ENCODE measurements at regions of chr3 and their contacts with region 1.

Region 1: DNA sequence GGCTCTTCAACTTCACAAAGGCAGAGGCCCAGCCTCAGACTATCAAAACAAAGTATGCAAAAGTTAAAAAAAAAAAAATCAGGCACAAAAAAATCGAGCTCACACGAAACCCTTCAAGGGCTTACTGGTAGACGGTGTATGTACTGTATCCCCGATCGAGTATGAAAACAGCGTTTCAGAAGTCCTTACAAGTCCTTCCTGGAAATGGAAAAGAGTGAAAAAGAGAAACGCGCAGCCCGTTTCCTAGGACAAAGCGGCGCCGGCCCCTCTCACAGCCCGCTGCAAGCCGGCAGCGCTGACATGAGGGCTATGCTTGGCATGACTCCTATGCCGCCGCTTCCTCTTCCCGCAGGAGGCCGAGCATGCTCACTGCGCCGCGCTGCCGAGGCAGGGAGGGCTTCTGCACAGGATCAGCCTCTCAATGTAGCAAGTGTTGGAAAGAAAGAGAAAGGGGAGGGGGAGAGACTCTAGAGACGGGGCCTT is at the start of gene VGLL4:
- DNase-seq: peak; percentile 72
- H3K4me3 Mint-ChIP-seq: peak within 1 kb of the TSS; percentile 98
- H3K27ac Mint-ChIP-seq: peak within 1 kb of the TSS; percentile 89
- H3K4me1 Mint-ChIP-seq: peaks cover 33% of the 10 kb centered on the region
- H3K27me3 Mint-ChIP-seq: no peaks in the 10 kb centered on the region
- total RNA-seq, gene VGLL4: 6.3 to 7.7 TPM

Region 2: GRCh38 chr3:11582191-11582968 is 61.3 kb before region 1 on chr3:
- CTCF ChIA-PET with region 1: interaction called, 3 read pairs
- intact Hi-C with region 1: loop called (anchors 5 kb)
- DNase-seq: peak; percentile 51
- H3K4me3 Mint-ChIP-seq: peak overlapping the region; percentile 56
- H3K27ac Mint-ChIP-seq: no peak overlapping the region
- H3K4me1 Mint-ChIP-seq: peaks cover 52% of the 10 kb centered on the region
- H3K27me3 Mint-ChIP-seq: no peaks in the 10 kb centered on the region

Region 3: DNA sequence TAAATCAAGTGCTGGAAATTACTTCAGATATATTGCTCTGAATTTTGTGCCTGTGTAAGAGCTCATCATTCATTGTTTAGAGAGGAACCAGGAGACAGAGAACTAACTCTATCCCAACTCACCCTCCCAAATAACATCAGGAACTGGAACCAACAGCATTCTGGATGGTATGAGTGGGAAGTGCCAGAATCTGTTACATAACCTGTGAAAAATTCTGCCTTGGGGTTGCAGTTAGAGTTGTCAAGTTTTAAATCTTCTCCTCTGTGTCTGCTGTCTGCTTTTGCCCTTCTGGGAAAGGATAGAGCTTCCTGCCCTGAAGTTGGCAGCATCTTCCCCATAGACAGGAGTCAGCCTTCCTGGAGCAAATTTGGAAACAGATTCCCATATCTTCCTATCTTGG is 473.8 kb after region 1 on chr3:
- CTCF ChIA-PET with region 1: no interaction called
- intact Hi-C with region 1: loop called (anchors 5 kb)
- DNase-seq: no peak
- H3K4me3 Mint-ChIP-seq: no peak overlapping the region
- H3K27ac Mint-ChIP-seq: no peak overlapping the region
- H3K4me1 Mint-ChIP-seq: peaks cover 2% of the 10 kb centered on the region
- H3K27me3 Mint-ChIP-seq: peaks cover 26% of the 10 kb centered on the region

Region 4: GRCh38 chr3:13419505-13420044 is 1775.9 kb after region 1 on chr3:
- CTCF ChIA-PET with region 1: no interaction called
- intact Hi-C with region 1: loop called (anchors 10 kb)
- DNase-seq: peak; percentile 52
- H3K4me3 Mint-ChIP-seq: peak overlapping the region; percentile 92
- H3K27ac Mint-ChIP-seq: peak overlapping the region; percentile 93
- H3K4me1 Mint-ChIP-seq: peaks cover 70% of the 10 kb centered on the region
- H3K27me3 Mint-ChIP-seq: no peaks in the 10 kb centered on the region

Measured in activated naive CD4-positive, alpha-beta T cell treated with anti-CD3 and anti-CD28 coated beads for 36 hours (primary cell).